HepG2 (cell line): ENCODE measurements at regions of chr9 and their contacts with region 1.

Region 1: GRCh38 chr9:806285-807156 is 35.0 kb upstream of the DMRT1 start:
- DNase-seq: peak; percentile 35
- ATAC-seq: peak; percentile 79
- H3K4me3 ChIP-seq: no peak overlapping the region
- H3K27ac ChIP-seq: no peak overlapping the region
- H3K4me1 ChIP-seq: no peaks in the 10 kb centered on the region
- H3K27me3 ChIP-seq: no peaks in the 10 kb centered on the region
- CTCF ChIP-seq: peak; percentile 73
- EP300 ChIP-seq: no peak
- POLR2A ChIP-seq: no peak
- RAD21 ChIP-seq: peak; percentile 48

Region 2: GRCh38 chr9:347667-348292 is 458.7 kb before region 1 on chr9:
- CTCF ChIA-PET with region 1: interaction called, 3 read pairs
- POLR2A ChIA-PET with region 1: no interaction called
- in situ Hi-C with region 1: no loop called
- intact Hi-C with region 1: loop called (anchors 5 kb)
- DNase-seq: peak; percentile 29
- ATAC-seq: peak; percentile 79
- H3K4me3 ChIP-seq: no peak overlapping the region
- H3K27ac ChIP-seq: no peak overlapping the region
- H3K4me1 ChIP-seq: no peaks in the 10 kb centered on the region
- H3K27me3 ChIP-seq: 0 out of 5 replicates have a peak, but pooled peaks cover 0 to 4% of the 10 kb centered on the region in 2 experiments
- CTCF ChIP-seq: peak; percentile 70
- EP300 ChIP-seq: no peak
- POLR2A ChIP-seq: no peak
- RAD21 ChIP-seq: peak; percentile 45; the same call in 1 of the 2 replicates

Region 3: GRCh38 chr9:581673-582497 is 224.6 kb before region 1 on chr9:
- CTCF ChIA-PET with region 1: interaction called, 15 read pairs
- POLR2A ChIA-PET with region 1: no interaction called
- in situ Hi-C with region 1: no loop called
- intact Hi-C with region 1: loop called (anchors 1 kb)
- DNase-seq: peak; percentile 41
- ATAC-seq: peak; percentile 100
- H3K4me3 ChIP-seq: no peak overlapping the region
- H3K27ac ChIP-seq: no peak overlapping the region
- H3K4me1 ChIP-seq: 0 out of 2 replicates have a peak, but pooled peaks cover 5% of the 10 kb centered on the region
- H3K27me3 ChIP-seq: no peaks in the 10 kb centered on the region
- CTCF ChIP-seq: peak; percentile 85
- EP300 ChIP-seq: no peak
- POLR2A ChIP-seq: no peak
- RAD21 ChIP-seq: peak; percentile 82

Region 4: GRCh38 chr9:1857808-1858207 is 1051.3 kb after region 1 on chr9:
- CTCF ChIA-PET with region 1: no interaction called
- POLR2A ChIA-PET with region 1: no interaction called
- in situ Hi-C with region 1: no loop called
- intact Hi-C with region 1: no loop called
- DNase-seq: no peak
- ATAC-seq: no peak
- H3K4me3 ChIP-seq: no peak overlapping the region
- H3K27ac ChIP-seq: no peak overlapping the region
- H3K4me1 ChIP-seq: no peaks in the 10 kb centered on the region
- H3K27me3 ChIP-seq: no peaks in the 10 kb centered on the region
- CTCF ChIP-seq: no peak
- EP300 ChIP-seq: no peak
- POLR2A ChIP-seq: no peak
- RAD21 ChIP-seq: no peak